Mammary epithelial cell (primary cell): ENCODE measurements at regions of chr1 and their contacts with region 1.

Region 1: GRCh38 chr1:44327679-44328491 is 27.2 kb downstream of the ERI3 start:
- DNase-seq: peak; percentile 100
- H3K4me3 ChIP-seq: no peak overlapping the region
- H3K27ac ChIP-seq: peak overlapping the region; percentile 94
- H3K4me1 ChIP-seq: peaks cover 49% of the 10 kb centered on the region
- H3K27me3 ChIP-seq: no peaks in the 10 kb centered on the region
- CTCF ChIP-seq: no peak

Region 2: GRCh38 chr1:44347280-44347679 is 19.4 kb after region 1 on chr1:
- CTCF ChIA-PET with region 1: no interaction called
- dilution Hi-C with region 1: no loop called
- in situ Hi-C with region 1: no loop called
- intact Hi-C with region 1: loop called (anchors 2 kb)
- DNase-seq: no peak
- H3K4me3 ChIP-seq: no peak overlapping the region
- H3K27ac ChIP-seq: no peak overlapping the region
- H3K4me1 ChIP-seq: no peaks in the 10 kb centered on the region
- H3K27me3 ChIP-seq: no peaks in the 10 kb centered on the region
- CTCF ChIP-seq: no peak

Region 3: GRCh38 chr1:44354840-44355581 is 27.1 kb after region 1 on chr1 and contains the start of gene ERI3:
- CTCF ChIA-PET with region 1: no interaction called
- dilution Hi-C with region 1: no loop called
- in situ Hi-C with region 1: no loop called
- intact Hi-C with region 1: loop called (anchors 1 kb)
- DNase-seq: peak; percentile 98
- H3K4me3 ChIP-seq: peak within 1 kb of the TSS; percentile 78 to 98 (median 90)
- H3K27ac ChIP-seq: peak within 1 kb of the TSS; percentile 77
- H3K4me1 ChIP-seq: peaks cover 6% of the 10 kb centered on the region
- H3K27me3 ChIP-seq: no peaks in the 10 kb centered on the region
- CTCF ChIP-seq: no peak
- total RNA-seq, gene ERI3: 58.4 to 59.3 TPM